A673 (cell line): ENCODE measurements at regions of chr16 and their contacts with region 1.

Region 1: DNA sequence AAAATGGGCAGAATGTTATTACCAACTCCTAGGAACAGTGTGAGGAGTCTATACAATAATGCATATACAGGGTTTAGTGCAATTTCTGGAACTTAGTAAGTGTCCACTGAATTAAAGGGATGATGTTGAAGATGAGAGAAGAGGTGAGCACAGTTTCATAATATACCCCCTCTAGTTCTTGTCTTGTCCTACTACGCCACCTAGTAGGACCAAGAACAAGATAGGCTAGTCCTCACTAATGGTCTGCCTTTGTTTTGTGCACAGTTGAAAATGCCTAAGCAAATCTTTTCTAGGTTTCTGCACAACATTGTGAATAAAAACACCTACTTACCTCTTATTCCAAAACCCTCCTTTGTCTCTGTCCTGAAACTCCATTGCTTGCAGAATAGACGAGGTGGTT is 670.2 kb downstream of the CDH8 start:
- DNase-seq: peak; percentile 49
- H3K4me3 ChIP-seq: no peak overlapping the region
- H3K27ac ChIP-seq: no peak overlapping the region
- H3K4me1 ChIP-seq: no peaks in the 10 kb centered on the region
- H3K27me3 ChIP-seq: no peaks in the 10 kb centered on the region
- CTCF ChIP-seq: peak; percentile 47

Region 2: GRCh38 chr16:61007694-61008093 is 358.3 kb before region 1 on chr16:
- CTCF ChIA-PET with region 1: no interaction called
- POLR2A ChIA-PET with region 1: no interaction called
- intact Hi-C with region 1: loop called (anchors 1 kb)
- DNase-seq: peak; percentile 72
- H3K4me3 ChIP-seq: no peak overlapping the region
- H3K27ac ChIP-seq: no peak overlapping the region
- H3K4me1 ChIP-seq: no peaks in the 10 kb centered on the region
- H3K27me3 ChIP-seq: no peaks in the 10 kb centered on the region
- CTCF ChIP-seq: peak; percentile 49